ENCODE measurements at regions of chr6 and their contacts with region 1.

Region 1: DNA sequence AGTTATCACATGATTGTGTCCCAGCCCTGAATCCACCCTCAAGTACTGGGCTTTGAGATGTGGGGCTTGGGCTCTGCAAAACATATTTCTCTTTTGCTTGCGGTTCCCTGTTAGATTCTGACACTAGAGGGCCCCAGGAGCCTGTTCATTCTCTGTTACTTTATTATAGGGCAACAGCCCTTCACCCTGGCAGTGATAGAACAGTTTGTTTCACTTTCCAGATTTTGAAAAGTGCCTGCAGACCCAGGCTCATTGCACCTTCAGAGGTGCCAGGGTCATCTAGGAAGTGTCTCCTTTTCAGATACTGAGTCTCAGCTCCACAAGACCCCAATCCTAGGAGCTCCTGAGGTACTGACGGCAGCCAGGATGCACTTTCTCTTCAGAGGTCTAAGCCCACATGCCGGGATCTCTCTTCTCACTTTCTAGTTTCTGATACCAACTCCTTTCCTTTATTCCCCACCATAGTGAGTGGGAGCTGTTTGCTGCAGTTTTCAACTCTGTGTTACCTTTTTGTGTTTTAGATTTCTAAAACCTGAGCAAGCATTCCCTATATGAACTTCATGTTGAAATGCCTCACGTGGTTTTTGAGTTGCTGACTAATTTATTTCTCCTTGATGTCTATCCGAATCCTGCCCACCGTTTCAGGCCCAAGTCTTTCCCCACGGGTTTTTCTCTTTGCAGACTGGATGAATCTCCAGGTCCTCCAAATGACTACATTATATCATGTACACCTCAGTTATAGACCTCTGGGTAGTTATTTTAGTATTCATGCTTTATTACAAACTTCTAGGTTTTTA is 10.9 kb downstream of the ABT1 start:
- DNase-seq: no peak
- ATAC-seq: peak; percentile 54
- H3K4me3 ChIP-seq: peak overlapping the region in 1 of 2 donors; percentile 46
- H3K27ac ChIP-seq: no peak overlapping the region
- H3K4me1 ChIP-seq: no peaks in the 10 kb centered on the region
- H3K27me3 ChIP-seq: peaks cover 0 to 1% of the 10 kb centered on the region in 2 donors

Region 2: GRCh38 chr6:27078734-27079357 is 471.2 kb after region 1 on chr6:
- intact Hi-C with region 1: loop called (anchors 2 kb)
- DNase-seq: no peak
- ATAC-seq: no peak
- H3K4me3 ChIP-seq: no peak overlapping the region
- H3K27ac ChIP-seq: no peak overlapping the region
- H3K4me1 ChIP-seq: no peaks in the 10 kb centered on the region
- H3K27me3 ChIP-seq: no peaks in the 10 kb centered on the region

Measured in aorta (tissue), 5 donors.